Activated B cell treated with CpG ODN at 0.5 μM for 24 hours (primary cell): ENCODE measurements at regions of chr11 and their contacts with region 1.

Region 1: GRCh38 chr11:111230122-111230465 is 15.4 kb upstream of the POU2AF2 start:
- DNase-seq: no peak
- ATAC-seq: peak; percentile 9
- H3K4me3 Mint-ChIP-seq: peak overlapping the region; percentile 72
- H3K27ac Mint-ChIP-seq: no peak overlapping the region
- H3K4me1 Mint-ChIP-seq: peaks cover 40% of the 10 kb centered on the region
- H3K27me3 Mint-ChIP-seq: no peaks in the 10 kb centered on the region
- CTCF ChIP-seq: no peak

Region 2: DNA sequence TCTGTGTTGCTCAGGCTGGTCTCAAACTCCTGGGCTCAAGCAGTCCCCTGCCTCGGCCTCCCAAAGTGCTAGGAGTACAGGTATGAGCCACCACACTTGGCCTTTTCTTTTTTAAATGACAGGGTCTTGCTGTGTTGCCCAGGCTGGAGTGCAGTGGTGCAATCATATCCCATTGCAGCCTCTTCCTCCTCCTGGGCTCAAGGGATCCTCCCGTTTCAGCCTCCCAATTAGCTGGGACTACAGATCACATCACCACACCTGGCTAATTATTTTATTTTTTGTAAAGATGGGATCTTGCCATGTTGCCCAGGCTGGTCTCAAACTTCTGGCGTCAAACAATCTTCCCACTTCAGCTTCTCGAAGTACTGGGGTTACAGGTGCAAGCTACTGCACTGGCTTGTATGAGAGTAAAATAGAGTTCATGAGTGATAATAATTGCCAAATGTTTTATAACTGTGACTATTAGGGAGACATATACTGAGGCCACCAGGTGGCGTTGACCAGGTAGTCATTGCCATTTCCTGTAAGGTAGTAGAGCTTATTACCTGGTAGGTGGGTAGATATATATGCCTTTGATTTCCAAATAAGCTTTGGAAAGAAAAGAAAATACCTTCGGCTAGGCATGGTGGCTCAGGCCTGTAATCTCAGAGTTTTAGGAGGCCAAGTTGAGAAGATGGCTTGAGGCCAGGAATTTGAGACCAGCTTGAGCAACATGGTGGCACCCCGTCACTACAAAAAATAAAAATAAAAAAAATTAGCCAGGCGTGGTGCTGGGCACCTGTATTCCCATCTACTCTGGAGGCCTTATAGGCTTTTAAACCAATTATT is 794.9 kb before region 1 on chr11:
- CTCF ChIA-PET with region 1: interaction called, 25 read pairs
- POLR2A ChIA-PET with region 1: no interaction called
- intact Hi-C with region 1: loop called (anchors 1 kb)
- DNase-seq: no peak
- ATAC-seq: no peak
- H3K4me3 Mint-ChIP-seq: no peak overlapping the region
- H3K27ac Mint-ChIP-seq: no peak overlapping the region
- H3K4me1 Mint-ChIP-seq: peaks cover 41% of the 10 kb centered on the region
- H3K27me3 Mint-ChIP-seq: no peaks in the 10 kb centered on the region
- CTCF ChIP-seq: no peak

Region 3: DNA sequence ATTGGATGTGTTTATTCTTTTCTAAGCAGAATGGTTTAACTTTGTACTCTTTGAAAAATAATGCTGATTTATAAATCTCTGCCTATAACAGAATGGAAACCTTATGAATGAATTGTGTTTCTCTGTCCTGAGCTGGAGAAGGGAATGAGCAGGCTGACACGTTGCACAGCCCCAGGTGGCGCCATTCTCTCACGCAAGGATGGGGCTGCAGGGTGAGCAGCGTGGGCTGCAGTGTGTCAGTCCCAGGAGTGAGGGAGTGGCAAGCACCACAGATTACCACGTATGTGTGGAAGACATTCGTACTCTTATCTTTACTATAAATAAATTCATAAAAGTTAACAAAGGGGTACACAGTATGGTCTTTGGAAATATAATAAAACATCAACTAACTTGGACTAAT is 766.9 kb before region 1 on chr11:
- CTCF ChIA-PET with region 1: interaction called, 20 read pairs
- POLR2A ChIA-PET with region 1: no interaction called
- intact Hi-C with region 1: loop called (anchors 1 kb)
- DNase-seq: no peak
- ATAC-seq: peak; percentile 61
- H3K4me3 Mint-ChIP-seq: no peak overlapping the region
- H3K27ac Mint-ChIP-seq: no peak overlapping the region
- H3K4me1 Mint-ChIP-seq: no peaks in the 10 kb centered on the region
- H3K27me3 Mint-ChIP-seq: no peaks in the 10 kb centered on the region
- CTCF ChIP-seq: no peak

Region 4: DNA sequence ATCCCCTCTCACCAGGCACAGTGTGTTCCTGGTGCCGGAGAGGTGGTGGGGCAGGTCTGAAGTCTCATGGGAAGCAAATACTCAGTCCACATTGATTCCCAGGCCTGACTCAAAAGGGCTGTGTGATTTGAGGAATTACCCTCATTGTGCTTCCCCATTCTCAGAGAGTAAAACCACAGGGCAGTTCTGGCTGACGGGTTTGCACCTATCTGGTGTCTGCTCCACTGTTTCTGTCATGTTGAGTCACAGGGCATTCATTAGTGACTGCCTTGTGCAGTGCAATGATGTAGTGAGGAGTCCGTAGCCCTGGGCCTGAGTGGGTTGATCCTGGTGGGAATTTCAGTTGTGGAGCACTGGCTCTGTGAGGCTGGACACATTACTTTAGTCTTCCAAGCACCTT is 432.6 kb before region 1 on chr11:
- CTCF ChIA-PET with region 1: no interaction called
- POLR2A ChIA-PET with region 1: no interaction called
- intact Hi-C with region 1: loop called (anchors 10 kb)
- DNase-seq: no peak
- ATAC-seq: peak; percentile 96
- H3K4me3 Mint-ChIP-seq: no peak overlapping the region
- H3K27ac Mint-ChIP-seq: no peak overlapping the region
- H3K4me1 Mint-ChIP-seq: peaks cover 17% of the 10 kb centered on the region
- H3K27me3 Mint-ChIP-seq: peaks cover 4% of the 10 kb centered on the region
- CTCF ChIP-seq: no peak

Region 5: GRCh38 chr11:111446404-111447111 is 216.5 kb after region 1 on chr11:
- CTCF ChIA-PET with region 1: interaction called, 4 read pairs
- POLR2A ChIA-PET with region 1: no interaction called
- intact Hi-C with region 1: loop called (anchors 1 kb)
- DNase-seq: peak; percentile 55
- ATAC-seq: peak; percentile 95
- H3K4me3 Mint-ChIP-seq: no peak overlapping the region
- H3K27ac Mint-ChIP-seq: peak overlapping the region; percentile 43
- H3K4me1 Mint-ChIP-seq: peaks cover 36% of the 10 kb centered on the region
- H3K27me3 Mint-ChIP-seq: peaks cover 2% of the 10 kb centered on the region
- CTCF ChIP-seq: no peak

Region 6: GRCh38 chr11:111500481-111500880 is 270.4 kb after region 1 on chr11:
- CTCF ChIA-PET with region 1: no interaction called
- POLR2A ChIA-PET with region 1: no interaction called
- intact Hi-C with region 1: no loop called
- DNase-seq: no peak
- ATAC-seq: no peak
- H3K4me3 Mint-ChIP-seq: no peak overlapping the region
- H3K27ac Mint-ChIP-seq: no peak overlapping the region
- H3K4me1 Mint-ChIP-seq: no peaks in the 10 kb centered on the region
- H3K27me3 Mint-ChIP-seq: peaks cover 31% of the 10 kb centered on the region
- CTCF ChIP-seq: no peak